K562 (cell line): ENCODE measurements at regions of chr2 and their contacts with region 1.

Region 1: GRCh38 chr2:222707689-222708525 is 36.4 kb downstream of the MOGAT1 start:
- DNase-seq: peak; percentile 35 to 79 (median 38)
- ATAC-seq: peak; percentile 72
- H3K4me3 ChIP-seq: no peak overlapping the region
- H3K27ac ChIP-seq: no peak overlapping the region
- H3K4me1 ChIP-seq: no peaks in the 10 kb centered on the region; a peak in 2 of 5 replicates
- H3K27me3 ChIP-seq: no peaks in the 10 kb centered on the region
- CTCF ChIP-seq: peak; percentile 71 to 73 (median 71)
- EP300 ChIP-seq: no peak
- POLR2A ChIP-seq: no peak
- RAD21 ChIP-seq: peak; percentile 78

Region 2: DNA sequence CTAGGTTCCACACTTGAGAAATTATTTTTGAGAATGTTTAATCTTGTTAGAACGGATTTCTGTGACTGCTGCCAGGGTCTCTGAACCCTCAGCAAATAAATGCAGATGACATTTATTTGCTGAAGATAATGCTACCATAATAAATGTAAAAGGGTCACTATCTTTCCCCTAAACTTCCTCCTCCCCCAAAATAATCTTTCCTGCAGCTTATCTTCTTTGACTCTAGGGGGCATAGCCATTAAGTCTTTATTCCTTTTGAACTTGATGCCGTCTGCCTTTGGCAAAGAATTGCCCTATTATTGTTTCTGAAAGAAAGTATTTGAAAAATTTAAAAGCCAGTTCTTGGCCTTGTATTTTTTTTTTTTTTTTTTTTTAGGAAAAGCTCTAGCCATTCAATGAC is 89.4 kb after region 1 on chr2:
- CTCF ChIA-PET with region 1: no interaction called
- POLR2A ChIA-PET with region 1: no interaction called
- in situ Hi-C with region 1: no loop called
- intact Hi-C with region 1: loop called (anchors 5 kb)
- DNase-seq: peak in 3 of 4 experiments; percentile 10 to 29 (median 23)
- ATAC-seq: peak; percentile 71
- H3K4me3 ChIP-seq: no peak overlapping the region
- H3K27ac ChIP-seq: no peak overlapping the region
- H3K4me1 ChIP-seq: peaks cover 0 to 6% of the 10 kb centered on the region in 2 experiments; a peak in 4 of 5 replicates
- H3K27me3 ChIP-seq: no peaks in the 10 kb centered on the region
- CTCF ChIP-seq: peak in 2 of 3 experiments; percentile 26 to 56; a peak in 4 of 6 replicates
- EP300 ChIP-seq: no peak
- POLR2A ChIP-seq: no peak
- RAD21 ChIP-seq: peak; percentile 37 to 52; a peak in 3 of 4 replicates

Region 3: DNA sequence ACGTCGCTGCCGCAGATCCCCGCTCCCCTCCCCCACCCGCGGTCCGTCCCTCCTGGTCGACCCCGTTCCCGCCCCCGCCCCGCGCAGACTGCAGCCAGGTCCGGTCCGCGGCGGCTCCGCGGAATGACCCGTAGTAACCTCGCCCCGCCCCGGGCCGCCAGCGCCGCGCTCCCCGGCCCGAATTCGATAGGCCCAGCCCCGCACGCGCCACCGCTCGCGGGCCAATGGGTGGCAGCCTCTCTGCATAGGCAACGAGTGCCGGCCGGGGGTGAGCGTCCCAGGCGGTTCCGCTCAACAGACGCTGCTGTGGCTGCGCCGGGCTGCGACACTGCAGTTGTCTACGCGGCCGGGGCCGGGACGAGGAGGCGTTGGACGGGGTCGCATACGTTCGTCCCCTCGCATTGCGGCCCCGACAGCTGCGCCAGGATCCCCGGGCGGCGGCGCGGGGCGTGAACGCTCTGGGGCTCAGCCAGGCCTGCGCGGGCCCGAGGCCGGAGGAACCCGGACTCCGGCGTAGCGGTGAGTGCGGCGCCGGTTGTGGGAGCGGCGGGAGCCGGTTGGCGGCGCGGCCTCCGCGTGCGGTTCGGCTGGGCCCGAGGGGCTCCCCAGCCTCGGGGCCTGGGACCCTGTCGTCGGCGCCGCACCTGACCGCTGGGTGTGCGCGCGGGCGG is 153.0 kb after region 1 on chr2 and contains the start of gene ACSL3:
- CTCF ChIA-PET with region 1: interaction called, 5 read pairs
- POLR2A ChIA-PET with region 1: interaction called, 6 read pairs
- in situ Hi-C with region 1: no loop called
- intact Hi-C with region 1: loop called (anchors 1 kb)
- DNase-seq: peak; percentile 88 to 94 (median 90)
- ATAC-seq: peak; percentile 97
- H3K4me3 ChIP-seq: peak within 1 kb of the TSS; percentile 93
- H3K27ac ChIP-seq: peak within 1 kb of the TSS; percentile 92
- H3K4me1 ChIP-seq: peaks cover 6 to 35% of the 10 kb centered on the region in 2 experiments; a peak in 4 of 5 replicates
- H3K27me3 ChIP-seq: no peaks in the 10 kb centered on the region
- CTCF ChIP-seq: peak in 1 of 3 experiments; percentile 8; a peak in 1 of 6 replicates
- EP300 ChIP-seq: 0 out of 2 replicates have a peak, but pooled peaks have one; percentile 19
- POLR2A ChIP-seq: peak; percentile 96
- RAD21 ChIP-seq: 0 out of 4 replicates have a peak, but pooled peaks of 1 of the 2 experiments have one; percentile 1
- polyA plus RNA-seq, gene ACSL3: 21.3 to 28.0 TPM

Region 4: GRCh38 chr2:222903234-222904220 is 195.6 kb after region 1 on chr2:
- CTCF ChIA-PET with region 1: interaction called, 3 read pairs
- POLR2A ChIA-PET with region 1: interaction called, 3 read pairs
- in situ Hi-C with region 1: no loop called
- intact Hi-C with region 1: loop called (anchors 1 kb)
- DNase-seq: peak; percentile 11 to 50 (median 24)
- ATAC-seq: peak; percentile 84
- H3K4me3 ChIP-seq: no peak overlapping the region
- H3K27ac ChIP-seq: no peak overlapping the region
- H3K4me1 ChIP-seq: no peaks in the 10 kb centered on the region; a peak in 1 of 5 replicates
- H3K27me3 ChIP-seq: no peaks in the 10 kb centered on the region
- CTCF ChIP-seq: peak; percentile 38 to 68 (median 43); a peak in 4 of 6 replicates
- EP300 ChIP-seq: no peak
- POLR2A ChIP-seq: no peak
- RAD21 ChIP-seq: peak; percentile 58 to 75

Region 5: GRCh38 chr2:222939208-222939856 is 231.4 kb after region 1 on chr2:
- CTCF ChIA-PET with region 1: interaction called, 10 read pairs
- POLR2A ChIA-PET with region 1: interaction called, 3 read pairs
- in situ Hi-C with region 1: no loop called
- intact Hi-C with region 1: loop called (anchors 1 kb)
- DNase-seq: peak; percentile 22 to 74 (median 34)
- ATAC-seq: peak; percentile 93
- H3K4me3 ChIP-seq: no peak overlapping the region
- H3K27ac ChIP-seq: no peak overlapping the region
- H3K4me1 ChIP-seq: no peaks in the 10 kb centered on the region
- H3K27me3 ChIP-seq: no peaks in the 10 kb centered on the region
- CTCF ChIP-seq: peak; percentile 78 to 98 (median 93)
- EP300 ChIP-seq: no peak
- POLR2A ChIP-seq: no peak
- RAD21 ChIP-seq: peak; percentile 56 to 76